ENCODE measurements at regions of chrX and their contacts with region 1.

Region 1: DNA sequence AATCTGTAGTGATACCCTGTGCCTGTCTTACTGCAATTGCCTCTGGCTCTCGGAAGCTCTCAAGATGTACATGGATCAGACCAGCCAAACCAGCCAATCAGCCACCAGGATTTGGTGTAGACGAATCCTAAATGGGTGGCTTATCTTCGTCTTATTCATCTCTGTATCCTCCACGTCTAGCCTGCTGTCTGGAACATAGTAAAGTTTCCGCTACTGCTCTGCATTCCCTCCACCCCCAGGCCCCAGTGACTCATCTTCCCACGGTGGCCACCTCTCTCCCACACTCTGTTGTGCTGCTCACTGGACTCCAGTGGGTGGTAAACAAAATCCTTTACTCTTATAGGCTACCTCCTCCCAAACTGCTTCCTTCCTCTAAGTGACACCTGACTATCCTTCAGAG is 37.8 kb downstream of the SEPTIN6 start:
- DNase-seq: peak in 2 of 9 donors; percentile 49 to 73
- ATAC-seq: peak; percentile 45
- H3K4me3 ChIP-seq: no peak overlapping the region
- H3K4me3 Mint-ChIP-seq: peak overlapping the region in 9 of 10 donors; percentile 4 to 76 (median 45)
- H3K27ac ChIP-seq: peak overlapping the region; percentile 57
- H3K27ac Mint-ChIP-seq: peak overlapping the region; percentile 41 to 92 (median 86)
- H3K4me1 ChIP-seq: peaks cover 0 to 18% of the 10 kb centered on the region in 2 donors
- H3K4me1 Mint-ChIP-seq: peaks cover 18 to 47% (median 36%) of the 10 kb centered on the region in 7 donors
- H3K27me3 ChIP-seq: no peaks in the 10 kb centered on the region
- H3K27me3 Mint-ChIP-seq: no peaks in the 10 kb centered on the region

Region 2: DNA sequence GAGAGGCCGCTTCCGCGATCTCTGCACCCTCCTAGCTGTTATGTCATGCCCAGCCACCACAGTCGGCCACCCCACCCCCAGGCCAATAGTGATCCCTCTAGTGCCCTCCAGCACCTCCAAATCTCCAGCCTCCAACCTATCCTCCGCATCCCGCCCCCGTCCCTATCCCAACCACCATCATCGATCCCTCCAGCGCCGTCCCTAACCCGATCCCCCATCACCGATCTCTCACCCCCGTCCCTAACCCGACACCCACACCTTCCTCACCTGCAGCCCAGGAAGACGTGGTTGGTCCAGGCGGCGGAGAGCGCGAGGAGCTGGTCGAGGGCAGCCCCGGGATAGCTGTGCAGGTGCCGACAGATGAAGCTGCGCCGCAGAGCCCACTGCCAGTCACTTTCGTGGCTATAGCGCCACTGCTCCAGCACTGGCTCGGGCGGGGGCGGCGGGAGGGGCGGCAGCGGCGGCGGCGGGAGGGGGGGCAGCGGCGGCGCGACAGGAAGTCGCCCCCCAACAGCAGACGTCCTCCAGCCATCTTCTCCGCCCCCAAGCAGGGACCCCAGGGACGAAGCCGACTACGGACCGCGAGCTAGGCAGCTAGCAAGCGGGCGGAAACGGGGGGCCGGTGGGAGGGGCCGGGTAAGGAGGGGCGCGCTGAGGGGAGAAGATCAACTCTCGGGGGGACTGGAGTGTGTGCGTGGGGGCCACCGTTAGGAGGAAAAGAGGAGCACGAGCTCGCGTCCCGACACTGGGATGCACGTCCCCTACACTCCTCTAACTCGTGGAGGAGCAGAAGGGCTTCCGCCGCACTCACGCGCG is 49.5 kb before region 1 on chrX:
- CTCF ChIA-PET with region 1: no interaction called
- POLR2A ChIA-PET with region 1: no interaction called
- intact Hi-C with region 1: no loop called
- DNase-seq: peak in 5 of 9 donors; percentile 9 to 60 (median 39)
- ATAC-seq: peak; percentile 65
- H3K4me3 ChIP-seq: peak overlapping the region; percentile 71
- H3K4me3 Mint-ChIP-seq: peak overlapping the region; percentile 93 to 100 (median 94)
- H3K27ac ChIP-seq: peak overlapping the region; percentile 90
- H3K27ac Mint-ChIP-seq: peak overlapping the region; percentile 91 to 99 (median 98)
- H3K4me1 ChIP-seq: peaks cover 5 to 11% of the 10 kb centered on the region in 2 donors
- H3K4me1 Mint-ChIP-seq: peaks cover 6 to 48% (median 39%) of the 10 kb centered on the region in 7 donors
- H3K27me3 ChIP-seq: no peaks in the 10 kb centered on the region
- H3K27me3 Mint-ChIP-seq: peaks cover 0 to 4% (median 0%) of the 10 kb centered on the region in 5 donors

Region 3: DNA sequence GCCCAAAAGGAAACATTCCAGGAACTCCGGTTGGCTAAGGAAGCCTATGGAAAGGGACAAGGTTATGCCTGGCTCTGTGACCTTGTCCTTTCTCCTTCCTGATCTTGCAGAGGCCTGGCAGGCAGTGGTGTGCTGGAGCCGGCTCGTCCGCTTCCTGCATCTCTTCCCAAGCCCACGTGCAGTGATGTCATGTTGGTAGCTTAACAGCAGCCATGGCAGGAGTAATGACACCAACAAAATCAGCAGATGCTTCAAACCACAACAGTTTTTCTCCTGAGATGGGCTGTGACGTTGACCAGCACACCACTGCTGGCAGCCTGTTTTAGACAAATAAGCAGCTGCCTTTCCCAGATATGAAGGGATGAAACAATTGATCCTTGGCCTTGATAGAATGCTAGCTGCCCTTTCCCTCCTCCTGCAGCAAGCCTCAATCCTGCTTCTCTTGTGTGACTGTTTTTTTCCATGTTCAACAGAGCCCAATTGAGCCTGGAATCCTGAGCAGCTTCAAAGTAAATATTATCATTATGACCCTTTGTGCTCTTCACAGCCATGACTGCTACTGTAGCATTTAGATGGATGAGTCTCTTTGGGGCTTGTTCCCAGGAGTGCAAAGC is 14.4 kb after region 1 on chrX:
- CTCF ChIA-PET with region 1: interaction called, 4 read pairs
- POLR2A ChIA-PET with region 1: interaction called, 4 read pairs
- intact Hi-C with region 1: loop called in 1 of 2 experiments (anchors 2 kb)
- DNase-seq: no peak
- ATAC-seq: no peak
- H3K4me3 ChIP-seq: no peak overlapping the region
- H3K4me3 Mint-ChIP-seq: peak overlapping the region in 1 of 10 donors; percentile 5
- H3K27ac ChIP-seq: peak overlapping the region; percentile 21
- H3K27ac Mint-ChIP-seq: peak overlapping the region in 8 of 9 donors; percentile 31 to 82 (median 64)
- H3K4me1 ChIP-seq: peaks cover 0 to 18% of the 10 kb centered on the region in 2 donors
- H3K4me1 Mint-ChIP-seq: peaks cover 0 to 69% (median 27%) of the 10 kb centered on the region in 7 donors
- H3K27me3 ChIP-seq: no peaks in the 10 kb centered on the region
- H3K27me3 Mint-ChIP-seq: no peaks in the 10 kb centered on the region

Region 4: DNA sequence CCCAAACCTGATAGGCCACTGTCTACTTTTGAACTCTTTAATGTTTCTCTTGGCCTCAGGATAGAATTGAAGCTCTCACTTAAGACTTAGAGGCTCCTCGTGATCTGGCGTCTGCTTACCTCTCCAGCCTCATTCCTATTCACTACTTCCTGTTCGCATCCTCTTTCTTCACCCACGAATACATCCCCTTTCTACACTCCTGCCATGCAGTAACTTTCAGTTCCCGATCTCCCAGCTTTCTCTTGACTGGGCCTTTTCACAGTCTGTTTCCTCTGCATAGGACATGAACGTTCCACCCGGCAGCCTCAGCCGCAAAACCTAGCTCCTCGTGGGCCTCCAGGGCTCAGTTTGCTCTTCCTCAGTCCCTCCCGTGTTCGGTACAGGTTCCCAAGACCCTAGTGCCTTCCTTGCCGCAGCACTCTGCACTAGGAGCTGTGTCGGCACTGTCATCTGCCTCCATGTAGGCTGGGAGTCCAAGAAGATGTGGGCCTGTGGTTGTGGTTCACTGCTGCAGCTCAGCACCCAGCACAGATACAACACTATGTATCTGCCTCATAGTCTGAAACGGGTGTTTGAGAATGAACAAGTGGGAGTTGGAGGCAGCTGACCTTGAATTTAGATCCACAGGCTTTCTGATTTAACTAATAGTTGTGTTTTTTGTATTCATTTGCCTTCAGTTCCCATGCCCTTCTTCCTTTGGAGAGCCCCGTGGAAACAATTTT is 120.6 kb after region 1 on chrX:
- CTCF ChIA-PET with region 1: no interaction called
- POLR2A ChIA-PET with region 1: no interaction called
- intact Hi-C with region 1: loop called in 1 of 2 experiments (anchors 5 kb)
- DNase-seq: no peak
- ATAC-seq: peak; percentile 59
- H3K4me3 ChIP-seq: no peak overlapping the region
- H3K4me3 Mint-ChIP-seq: peak overlapping the region in 2 of 10 donors; percentile 31 to 54
- H3K27ac ChIP-seq: no peak overlapping the region
- H3K27ac Mint-ChIP-seq: peak overlapping the region in 2 of 9 donors; percentile 36 to 73
- H3K4me1 ChIP-seq: no peaks in the 10 kb centered on the region
- H3K4me1 Mint-ChIP-seq: peaks cover 0 to 6% (median 0%) of the 10 kb centered on the region in 7 donors
- H3K27me3 ChIP-seq: no peaks in the 10 kb centered on the region
- H3K27me3 Mint-ChIP-seq: no peaks in the 10 kb centered on the region

Region 5: GRCh38 chrX:119899125-119899524 is 244.0 kb after region 1 on chrX:
- CTCF ChIA-PET with region 1: no interaction called
- POLR2A ChIA-PET with region 1: no interaction called
- intact Hi-C with region 1: no loop called
- DNase-seq: no peak
- ATAC-seq: no peak
- H3K4me3 ChIP-seq: no peak overlapping the region
- H3K4me3 Mint-ChIP-seq: no peak overlapping the region
- H3K27ac ChIP-seq: no peak overlapping the region
- H3K27ac Mint-ChIP-seq: no peak overlapping the region
- H3K4me1 ChIP-seq: no peaks in the 10 kb centered on the region
- H3K4me1 Mint-ChIP-seq: peaks cover 0 to 4% (median 0%) of the 10 kb centered on the region in 7 donors
- H3K27me3 ChIP-seq: no peaks in the 10 kb centered on the region
- H3K27me3 Mint-ChIP-seq: no peaks in the 10 kb centered on the region

Measured in naive thymus-derived CD4-positive, alpha-beta T cell (primary cell).